ENCODE measurements at regions of chr4 and their contacts with region 1.

Region 1: DNA sequence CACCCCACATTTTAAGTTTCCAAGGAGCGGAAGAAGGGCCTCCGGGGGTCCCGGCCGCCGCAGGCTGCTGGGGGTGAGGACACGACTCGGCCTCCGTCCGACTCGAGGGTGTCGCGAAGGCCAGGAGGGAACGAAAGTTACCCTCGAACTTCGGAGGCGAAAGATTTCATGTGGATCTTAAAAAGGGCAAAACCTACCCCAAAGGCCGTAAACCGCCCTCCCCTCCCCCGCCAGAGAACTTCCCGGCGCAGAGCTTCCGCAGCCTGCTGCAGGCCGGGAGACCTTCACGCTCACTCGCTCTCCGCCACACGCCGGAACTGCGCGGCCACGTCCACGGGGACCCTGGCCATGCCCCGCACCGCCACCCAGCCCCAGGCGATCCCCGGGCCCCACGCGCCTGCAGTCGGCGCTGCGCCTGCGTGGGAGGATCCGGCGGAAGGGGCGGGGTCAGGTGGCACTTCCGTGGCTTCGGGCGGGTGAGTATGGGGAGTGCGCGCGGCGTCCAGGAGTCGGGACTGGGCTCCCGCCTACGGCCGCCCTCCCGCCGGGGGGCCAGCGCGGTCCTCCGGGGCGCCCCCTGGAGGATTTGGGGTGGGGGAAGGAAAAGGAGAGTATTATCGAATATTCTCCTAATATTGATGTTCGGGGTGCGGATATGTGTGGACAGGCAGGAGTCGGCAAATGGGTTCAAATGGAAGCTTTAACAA is at the start of gene MMAA:
- DNase-seq: peak; percentile 94 to 96 (median 94)
- H3K4me3 ChIP-seq: peak within 1 kb of the TSS; percentile 85
- H3K4me3 Mint-ChIP-seq: peak within 1 kb of the TSS; percentile 94 to 100 (median 99)
- H3K27ac ChIP-seq: peak within 1 kb of the TSS; percentile 95
- H3K27ac Mint-ChIP-seq: peak within 1 kb of the TSS; percentile 96 to 100 (median 99)
- H3K4me1 ChIP-seq: peaks cover 28% of the 10 kb centered on the region
- H3K4me1 Mint-ChIP-seq: peaks cover 39 to 60% (median 58%) of the 10 kb centered on the region in 3 donors
- H3K27me3 ChIP-seq: no peaks in the 10 kb centered on the region
- H3K27me3 Mint-ChIP-seq: peaks cover 0 to 4% of the 10 kb centered on the region in 2 donors
- total RNA-seq, gene MMAA: 13.1 to 14.9 TPM

Region 2: GRCh38 chr4:145179281-145179860 is 439.7 kb before region 1 on chr4:
- CTCF ChIA-PET with region 1: interaction called, 5 read pairs
- POLR2A ChIA-PET with region 1: interaction called, 10 read pairs
- DNase-seq: peak; percentile 68 to 83 (median 75)
- H3K4me3 ChIP-seq: peak overlapping the region; percentile 82
- H3K4me3 Mint-ChIP-seq: peak overlapping the region; percentile 89 to 98 (median 94)
- H3K27ac ChIP-seq: peak overlapping the region; percentile 90
- H3K27ac Mint-ChIP-seq: peak overlapping the region; percentile 92 to 99 (median 98)
- H3K4me1 ChIP-seq: peaks cover 35% of the 10 kb centered on the region
- H3K4me1 Mint-ChIP-seq: peaks cover 39 to 60% (median 55%) of the 10 kb centered on the region in 3 donors
- H3K27me3 ChIP-seq: no peaks in the 10 kb centered on the region
- H3K27me3 Mint-ChIP-seq: peaks cover 0 to 4% of the 10 kb centered on the region in 2 donors

Region 3: DNA sequence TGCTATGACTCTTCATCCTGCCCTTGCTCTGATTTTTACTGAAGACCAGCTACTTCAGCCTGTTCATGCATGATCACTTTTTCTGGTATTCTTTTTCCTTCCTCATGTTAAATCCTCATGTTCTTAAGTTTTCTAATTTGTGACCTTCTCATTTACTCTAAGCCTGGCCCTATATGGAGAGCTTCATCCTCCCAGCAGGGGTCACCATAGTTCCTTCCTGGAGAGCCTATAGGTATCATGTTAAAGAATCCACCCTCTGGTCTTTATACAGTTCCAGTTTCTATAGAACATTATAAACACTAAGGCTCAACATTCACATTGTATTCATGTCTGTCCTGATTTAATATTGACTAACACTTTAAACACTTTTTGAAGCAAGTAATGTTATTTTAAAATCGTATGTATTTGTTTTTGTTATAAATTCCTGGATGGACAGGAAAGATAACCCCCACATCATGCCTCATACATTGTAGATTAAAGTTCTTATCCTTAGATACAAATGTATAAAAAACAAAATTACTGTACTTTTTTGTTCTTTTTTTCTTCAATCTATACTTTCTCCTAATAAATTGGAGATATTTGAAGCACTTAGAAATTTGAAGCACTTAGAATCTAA is 384.9 kb before region 1 on chr4:
- CTCF ChIA-PET with region 1: interaction called, 17 read pairs
- POLR2A ChIA-PET with region 1: no interaction called
- DNase-seq: peak; percentile 6 to 55 (median 26)
- H3K4me3 ChIP-seq: no peak overlapping the region
- H3K4me3 Mint-ChIP-seq: no peak overlapping the region
- H3K27ac ChIP-seq: no peak overlapping the region
- H3K27ac Mint-ChIP-seq: no peak overlapping the region
- H3K4me1 ChIP-seq: no peaks in the 10 kb centered on the region
- H3K4me1 Mint-ChIP-seq: no peaks in the 10 kb centered on the region
- H3K27me3 ChIP-seq: no peaks in the 10 kb centered on the region
- H3K27me3 Mint-ChIP-seq: peaks cover 2 to 24% of the 10 kb centered on the region in 2 donors

Region 4: DNA sequence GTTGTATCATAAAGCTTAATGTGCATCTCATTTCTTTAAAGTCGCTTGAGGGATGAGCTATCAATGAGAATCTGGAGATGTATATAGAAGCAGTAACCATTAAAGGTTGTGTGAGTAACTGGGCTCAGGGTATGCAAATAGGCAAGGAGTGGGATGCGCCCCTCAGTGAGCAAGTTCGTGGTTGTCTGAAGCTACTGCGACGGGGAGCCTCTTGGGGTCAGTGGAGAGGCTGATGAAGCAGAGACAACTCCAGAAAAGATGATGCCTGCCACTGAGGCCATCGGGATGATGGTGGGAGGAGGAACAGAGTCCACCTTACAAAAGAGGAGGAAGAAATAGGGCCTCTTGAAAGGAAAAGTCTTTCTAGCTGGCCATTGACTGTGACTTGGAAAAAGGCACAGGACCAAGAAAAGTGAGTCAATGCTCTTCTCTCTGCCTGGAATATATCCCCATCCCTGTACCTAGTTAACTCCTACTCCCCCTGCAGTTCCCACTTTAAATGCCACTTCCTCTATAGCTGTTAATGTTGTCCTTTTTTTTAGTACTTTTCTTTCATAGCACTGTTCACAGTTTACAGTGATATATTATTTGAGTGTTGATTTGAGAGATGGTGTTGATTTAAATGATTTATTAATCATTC is 505.1 kb after region 1 on chr4:
- CTCF ChIA-PET with region 1: no interaction called
- POLR2A ChIA-PET with region 1: no interaction called
- DNase-seq: no peak
- H3K4me3 ChIP-seq: no peak overlapping the region
- H3K4me3 Mint-ChIP-seq: no peak overlapping the region
- H3K27ac ChIP-seq: no peak overlapping the region
- H3K27ac Mint-ChIP-seq: no peak overlapping the region
- H3K4me1 ChIP-seq: no peaks in the 10 kb centered on the region
- H3K4me1 Mint-ChIP-seq: peaks cover 0 to 17% (median 0%) of the 10 kb centered on the region in 3 donors
- H3K27me3 ChIP-seq: no peaks in the 10 kb centered on the region
- H3K27me3 Mint-ChIP-seq: peaks cover 4 to 8% of the 10 kb centered on the region in 2 donors